Heart right ventricle (tissue), 16 donors: ENCODE measurements at regions of chr19 and their contacts with region 1.

Region 1: GRCh38 chr19:42184401-42184861 is 33.0 kb downstream of the DEDD2 start:
- DNase-seq: peak; percentile 65 to 68
- ATAC-seq: peak; percentile 56 to 86 (median 81)
- H3K4me3 ChIP-seq: no peak overlapping the region
- H3K27ac ChIP-seq: peak overlapping the region in 1 of 10 donors; percentile 64
- H3K4me1 ChIP-seq: peaks cover 0 to 33% (median 0%) of the 10 kb centered on the region in 9 donors
- H3K27me3 ChIP-seq: peaks cover 0 to 43% (median 35%) of the 10 kb centered on the region in 7 donors
- CTCF ChIP-seq: peak; percentile 65 to 91 (median 85)

Region 2: GRCh38 chr19:42108527-42109389 is 75.7 kb before region 1 on chr19:
- intact Hi-C with region 1: loop called in 4 of 10 experiments (anchors 2 to 5 kb)
- DNase-seq: peak; percentile 68 to 72
- ATAC-seq: peak; percentile 61 to 86 (median 81)
- H3K4me3 ChIP-seq: no peak overlapping the region
- H3K27ac ChIP-seq: no peak overlapping the region
- H3K4me1 ChIP-seq: peaks cover 0 to 32% (median 10%) of the 10 kb centered on the region in 9 donors
- H3K27me3 ChIP-seq: peaks cover 0 to 26% (median 6%) of the 10 kb centered on the region in 7 donors
- CTCF ChIP-seq: peak; percentile 71 to 100 (median 90)

Region 3: DNA sequence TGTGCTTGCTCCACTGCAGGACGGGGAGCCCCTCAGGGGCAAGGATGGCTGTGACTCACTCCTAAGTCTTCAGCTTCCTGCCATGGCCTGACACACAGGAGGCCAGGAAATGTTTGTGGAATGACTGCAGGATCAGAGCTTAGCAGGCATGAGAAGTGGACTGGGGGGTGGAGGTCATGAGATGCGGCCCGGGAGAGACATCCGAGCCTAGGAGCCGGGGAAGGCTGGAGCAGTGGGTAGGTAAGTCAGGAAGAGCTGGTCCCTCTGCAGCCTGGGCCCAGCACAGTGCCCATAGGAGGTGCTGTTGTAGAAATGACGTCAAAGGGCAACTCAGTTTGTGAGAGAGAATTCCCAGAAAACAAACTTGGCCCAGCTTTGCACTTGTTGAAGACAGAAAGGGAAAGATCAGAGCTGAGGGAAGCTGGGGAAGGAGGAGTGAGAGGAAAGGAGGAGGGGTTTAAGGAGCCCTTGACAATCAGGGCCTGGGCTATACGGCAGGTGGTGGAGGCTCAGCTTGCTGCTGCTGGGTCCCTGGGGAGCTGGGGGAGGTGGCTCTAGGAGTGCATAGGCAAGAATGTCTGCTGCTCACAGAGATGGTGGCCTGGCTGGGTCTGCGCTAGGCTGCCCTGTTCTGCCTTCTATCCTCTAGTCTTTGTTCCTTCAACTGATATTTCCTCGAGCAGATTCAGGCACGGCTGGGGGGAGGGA is 70.6 kb before region 1 on chr19:
- intact Hi-C with region 1: loop called in 4 of 10 experiments (anchors 2 to 5 kb)
- DNase-seq: no peak
- ATAC-seq: peak; percentile 9 to 90 (median 58)
- H3K4me3 ChIP-seq: no peak overlapping the region
- H3K27ac ChIP-seq: peak overlapping the region in 3 of 10 donors; percentile 19 to 79 (median 36)
- H3K4me1 ChIP-seq: peaks cover 2 to 35% (median 14%) of the 10 kb centered on the region in 9 donors
- H3K27me3 ChIP-seq: no peaks in the 10 kb centered on the region
- CTCF ChIP-seq: no peak

Region 4: DNA sequence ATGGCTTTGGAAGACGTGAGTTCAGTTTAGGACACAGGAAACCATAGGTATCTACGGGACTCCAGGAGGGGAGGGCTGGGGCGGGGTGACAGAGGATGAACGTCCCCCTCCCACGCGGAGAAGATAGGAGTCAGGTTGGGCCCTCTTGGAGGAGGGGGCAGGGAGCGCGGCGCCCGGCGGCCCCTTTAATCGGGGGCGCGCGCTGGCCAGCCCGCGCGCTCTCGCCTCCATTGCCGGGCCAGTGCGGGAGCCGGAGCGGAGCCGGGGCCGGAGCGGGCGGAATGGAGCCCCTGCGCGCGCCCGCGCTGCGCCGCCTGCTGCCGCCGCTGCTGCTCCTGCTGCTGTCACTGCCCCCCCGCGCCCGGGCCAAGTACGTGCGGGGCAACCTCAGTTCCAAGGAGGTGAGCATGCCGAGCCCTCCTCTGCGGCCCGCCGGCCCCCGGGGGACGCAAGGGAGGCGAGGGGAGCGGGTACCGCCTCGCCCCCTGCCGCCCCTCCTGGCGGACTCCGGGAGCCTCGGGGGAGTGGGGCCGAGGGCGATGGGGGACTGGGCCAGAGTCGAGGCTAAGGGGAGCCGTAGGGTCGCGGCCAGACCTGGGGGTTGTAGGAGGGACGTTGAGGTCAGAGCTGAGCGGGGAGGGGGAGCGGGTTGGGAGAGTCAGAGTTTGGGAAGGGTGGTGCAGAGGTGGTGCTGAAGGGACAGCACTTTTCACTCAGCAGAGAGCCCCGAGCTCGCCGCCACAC is 128.8 kb after region 1 on chr19 and contains the start of gene TMEM145:
- intact Hi-C with region 1: no loop called
- DNase-seq: no peak
- ATAC-seq: peak; percentile 70 to 87 (median 82)
- H3K4me3 ChIP-seq: peak within 1 kb of the TSS; percentile 10 to 64 (median 56)
- H3K27ac ChIP-seq: no peak within 1 kb of the TSS
- H3K4me1 ChIP-seq: peaks cover 0 to 21% (median 11%) of the 10 kb centered on the region in 9 donors
- H3K27me3 ChIP-seq: peaks cover 0 to 51% (median 17%) of the 10 kb centered on the region in 7 donors
- CTCF ChIP-seq: peak in 4 of 9 donors; percentile 7 to 43 (median 20)
- total RNA-seq, gene TMEM145: 0.15 to 1.0 (median 0.49) TPM in 5 of 10 donors, not detected in the others